GM12878 (cell line): ENCODE measurements at regions of chr3 and their contacts with region 1.

Region 1: DNA sequence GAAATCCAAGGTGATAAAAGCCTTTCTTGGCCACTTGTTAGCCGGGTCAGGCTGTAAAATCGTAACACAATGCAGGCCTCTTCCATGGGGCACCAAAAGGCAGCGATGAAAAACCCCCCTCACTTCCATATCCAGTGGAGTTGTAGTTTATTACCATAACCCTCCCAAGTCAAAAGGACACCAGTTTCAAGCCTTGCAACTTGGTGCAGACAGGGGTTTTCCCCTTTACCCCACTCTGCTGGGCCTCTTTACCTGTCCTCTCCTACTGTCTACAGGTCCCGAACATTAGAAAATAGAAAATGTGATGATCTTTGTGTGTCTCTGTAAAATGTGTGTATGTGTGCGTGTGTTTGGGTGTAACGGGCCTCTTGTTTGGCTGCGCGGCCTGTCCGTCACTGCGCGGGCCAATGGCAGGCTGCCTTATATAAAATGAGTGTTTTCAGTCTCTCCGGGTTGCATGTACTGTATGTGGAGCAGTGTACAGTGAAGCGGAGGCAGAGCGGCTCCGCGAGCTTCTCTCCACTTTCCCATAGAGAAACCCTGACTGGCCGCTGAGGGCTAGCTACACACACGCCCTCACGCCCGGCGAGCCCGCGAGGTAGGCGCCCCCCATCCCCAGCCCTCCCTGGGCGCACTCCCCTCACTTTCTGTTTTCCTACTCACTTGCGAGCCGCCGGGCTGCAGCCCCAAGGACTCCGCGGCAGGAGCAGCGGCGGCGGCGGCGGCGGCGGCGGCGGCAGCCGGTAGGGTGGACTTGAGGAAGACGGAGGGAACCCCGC is at the start of gene BBX:
- DNase-seq: peak; percentile 97
- ATAC-seq: peak; percentile 89
- H3K4me3 ChIP-seq: peak within 1 kb of the TSS; percentile 85
- H3K27ac ChIP-seq: peak within 1 kb of the TSS; percentile 84
- H3K4me1 ChIP-seq: peaks cover 10% of the 10 kb centered on the region; the same call in 1 of the 2 replicates
- H3K27me3 ChIP-seq: no peaks in the 10 kb centered on the region
- CTCF ChIP-seq: no peak
- EP300 ChIP-seq: no peak
- POLR2A ChIP-seq: peak; percentile 75
- RAD21 ChIP-seq: no peak
- polyA plus RNA-seq, gene BBX: 17.5 to 37.3 TPM

Region 2: GRCh38 chr3:107429320-107430181 is 93.1 kb before region 1 on chr3:
- CTCF ChIA-PET with region 1: interaction called, 3 read pairs
- POLR2A ChIA-PET with region 1: no interaction called
- RAD21 ChIA-PET with region 1: no interaction called
- SMC1A ChIA-PET with region 1: no interaction called
- in situ Hi-C with region 1: no loop called
- intact Hi-C with region 1: loop called (anchors 5 kb)
- DNase-seq: no peak
- ATAC-seq: peak; percentile 78
- H3K4me3 ChIP-seq: no peak overlapping the region
- H3K27ac ChIP-seq: no peak overlapping the region
- H3K4me1 ChIP-seq: no peaks in the 10 kb centered on the region; the same call in 1 of the 2 replicates
- H3K27me3 ChIP-seq: peaks cover 0 to 3% of the 10 kb centered on the region in 2 experiments; a peak in 3 of 4 replicates
- CTCF ChIP-seq: peak; percentile 70 to 85 (median 78)
- EP300 ChIP-seq: no peak
- POLR2A ChIP-seq: no peak
- RAD21 ChIP-seq: peak; percentile 57

Region 3: DNA sequence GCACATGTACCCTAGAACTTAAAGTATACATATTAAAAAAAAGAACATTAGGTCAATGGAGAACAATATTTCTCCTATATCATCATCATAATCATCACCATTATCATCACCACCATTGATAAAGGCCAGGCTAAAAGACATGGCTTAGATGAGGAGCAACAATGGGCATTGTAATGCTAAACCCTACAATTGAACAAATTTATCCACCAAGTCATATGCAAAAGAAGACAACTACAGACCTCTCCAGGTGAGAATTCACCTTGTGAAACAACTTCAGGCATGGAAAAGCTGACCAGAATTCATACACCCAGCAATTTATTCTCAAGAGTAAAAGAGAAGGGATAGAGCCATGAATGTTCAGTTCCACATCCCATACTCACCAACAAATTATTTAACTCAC is 46.2 kb before region 1 on chr3:
- CTCF ChIA-PET with region 1: no interaction called
- POLR2A ChIA-PET with region 1: no interaction called
- RAD21 ChIA-PET with region 1: no interaction called
- SMC1A ChIA-PET with region 1: no interaction called
- in situ Hi-C with region 1: no loop called
- intact Hi-C with region 1: no loop called
- DNase-seq: no peak
- ATAC-seq: no peak
- H3K4me3 ChIP-seq: no peak overlapping the region
- H3K27ac ChIP-seq: no peak overlapping the region
- H3K4me1 ChIP-seq: no peaks in the 10 kb centered on the region
- H3K27me3 ChIP-seq: no peaks in the 10 kb centered on the region
- CTCF ChIP-seq: no peak
- EP300 ChIP-seq: no peak
- POLR2A ChIP-seq: no peak
- RAD21 ChIP-seq: no peak